ENCODE measurements at regions of chrX and their contacts with region 1.

Region 1: GRCh38 chrX:110156167-110156754 is 153.3 kb downstream of the TMEM164 start:
- DNase-seq: no peak
- H3K4me3 ChIP-seq: no peak overlapping the region
- H3K27ac ChIP-seq: no peak overlapping the region
- H3K4me1 ChIP-seq: peaks cover 5% of the 10 kb centered on the region
- H3K27me3 ChIP-seq: no peaks in the 10 kb centered on the region
- CTCF ChIP-seq: no peak
- POLR2A ChIP-seq: no peak

Region 2: DNA sequence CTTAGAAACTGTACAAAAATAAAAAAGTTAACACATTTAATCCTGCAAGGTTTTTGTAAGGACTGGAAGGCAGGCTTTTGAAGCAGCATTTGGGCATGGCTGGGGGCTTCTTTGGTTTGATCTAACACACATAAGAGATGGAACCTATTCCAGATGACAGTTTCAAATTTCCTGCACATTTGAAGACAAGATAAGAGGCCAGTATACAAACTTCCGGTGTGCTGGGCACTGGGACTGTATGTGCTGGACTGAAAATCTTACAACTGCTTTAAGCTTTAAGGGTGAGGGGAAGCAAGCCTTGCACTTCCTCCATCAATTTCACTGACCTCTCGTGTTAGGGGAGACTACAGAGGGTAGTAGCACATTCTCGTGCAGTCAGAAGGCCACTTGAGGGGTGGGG is 38.7 kb after region 1 on chrX:
- CTCF ChIA-PET with region 1: no interaction called
- POLR2A ChIA-PET with region 1: no interaction called
- dilution Hi-C with region 1: no loop called
- intact Hi-C with region 1: no loop called
- DNase-seq: no peak
- H3K4me3 ChIP-seq: no peak overlapping the region
- H3K27ac ChIP-seq: no peak overlapping the region
- H3K4me1 ChIP-seq: no peaks in the 10 kb centered on the region
- H3K27me3 ChIP-seq: no peaks in the 10 kb centered on the region
- CTCF ChIP-seq: no peak
- POLR2A ChIP-seq: no peak

Region 3: GRCh38 chrX:110210417-110211139 is 54.3 kb after region 1 on chrX:
- CTCF ChIA-PET with region 1: interaction called, 11 read pairs
- POLR2A ChIA-PET with region 1: no interaction called
- dilution Hi-C with region 1: no loop called
- intact Hi-C with region 1: no loop called
- DNase-seq: peak; percentile 72
- H3K4me3 ChIP-seq: no peak overlapping the region
- H3K27ac ChIP-seq: peak overlapping the region; percentile 41
- H3K4me1 ChIP-seq: peaks cover 11% of the 10 kb centered on the region
- H3K27me3 ChIP-seq: no peaks in the 10 kb centered on the region
- CTCF ChIP-seq: no peak
- POLR2A ChIP-seq: no peak

Region 4: DNA sequence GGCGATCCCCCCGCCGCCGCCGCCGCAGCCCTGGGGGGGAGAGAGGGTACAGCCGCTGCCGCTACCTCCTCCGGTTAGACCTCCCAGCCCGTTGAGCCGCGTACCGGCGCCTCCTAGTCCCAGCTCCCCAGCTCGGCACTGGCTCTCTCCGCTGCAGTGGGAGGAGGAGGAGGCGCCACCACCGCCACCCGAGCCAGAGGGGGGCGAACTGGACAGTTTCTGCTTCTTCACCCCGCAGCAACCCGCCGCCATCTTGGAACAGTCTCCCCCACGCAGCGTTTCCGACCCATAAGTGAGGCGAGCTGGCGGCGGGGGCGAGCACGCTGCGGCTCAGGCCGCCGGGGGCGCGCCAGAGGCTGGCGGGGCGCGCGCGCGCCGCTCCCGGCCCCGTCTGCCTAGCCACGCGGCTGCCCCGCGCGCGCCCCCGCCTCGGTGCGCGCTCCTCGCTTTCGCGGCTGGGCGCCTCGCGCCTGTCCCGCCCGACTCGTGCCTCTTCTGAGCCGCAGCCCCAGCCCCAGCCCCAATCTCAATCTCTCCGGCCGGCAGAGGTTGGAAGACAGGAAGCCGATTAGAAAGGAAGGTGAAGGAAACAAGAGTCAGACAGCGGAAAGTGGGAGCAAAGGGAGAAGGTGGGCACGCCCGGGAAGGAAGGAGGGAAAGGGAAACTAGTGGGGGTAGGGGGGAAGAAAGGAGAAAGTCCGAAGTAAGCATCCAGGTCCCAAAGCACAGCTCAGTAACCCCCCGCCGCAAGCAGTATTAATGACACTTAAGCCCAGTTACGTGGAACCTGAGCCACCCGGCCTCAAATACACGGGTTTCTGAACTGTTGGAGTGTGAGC is 161.8 kb after region 1 on chrX and contains the start of gene AMMECR1:
- CTCF ChIA-PET with region 1: interaction called, 5 read pairs
- POLR2A ChIA-PET with region 1: no interaction called
- dilution Hi-C with region 1: no loop called
- intact Hi-C with region 1: loop called (anchors 2 kb)
- DNase-seq: peak; percentile 71
- H3K4me3 ChIP-seq: peak within 1 kb of the TSS; percentile 89
- H3K27ac ChIP-seq: peak within 1 kb of the TSS; percentile 53
- H3K4me1 ChIP-seq: peaks cover 9% of the 10 kb centered on the region
- H3K27me3 ChIP-seq: no peaks in the 10 kb centered on the region
- CTCF ChIP-seq: no peak
- POLR2A ChIP-seq: no peak
- total RNA-seq, gene AMMECR1: 6.8 and 6.9 TPM in 2 replicates

Region 5: DNA sequence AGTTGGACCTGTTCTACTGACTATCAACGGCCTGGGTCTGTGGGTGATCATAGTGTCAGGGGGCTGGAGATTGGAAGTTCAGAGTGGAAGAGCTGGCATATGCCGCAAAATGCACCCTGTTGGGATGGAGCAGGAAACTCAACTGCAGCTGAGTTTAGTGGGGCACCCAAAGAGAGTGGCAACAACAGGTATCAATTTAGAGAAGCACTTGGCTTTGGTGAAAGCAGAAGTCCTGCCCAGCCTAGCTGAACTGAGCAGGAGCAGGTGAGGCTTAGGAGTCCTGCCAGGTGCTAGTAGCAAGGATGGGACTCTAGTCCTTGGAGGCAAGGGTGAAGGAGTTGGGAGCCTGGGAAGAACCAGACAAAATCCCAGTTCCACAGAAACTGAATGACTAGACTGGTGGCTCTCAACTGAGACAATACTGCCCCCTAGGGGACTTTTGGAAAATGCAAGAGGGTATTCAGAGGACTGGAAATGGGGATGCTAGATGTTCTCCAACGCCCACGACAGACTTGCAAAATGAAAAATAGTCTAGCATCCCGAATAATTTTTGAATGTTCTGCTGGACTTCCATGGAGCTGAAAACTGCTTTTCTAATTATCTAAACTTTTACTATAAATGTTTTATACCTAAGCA is 251.8 kb after region 1 on chrX:
- CTCF ChIA-PET with region 1: interaction called, 286 read pairs
- POLR2A ChIA-PET with region 1: no interaction called
- dilution Hi-C with region 1: loop called (anchors 10 kb)
- intact Hi-C with region 1: loop called (anchors 1 kb)
- DNase-seq: peak; percentile 29
- H3K4me3 ChIP-seq: no peak overlapping the region
- H3K27ac ChIP-seq: no peak overlapping the region
- H3K4me1 ChIP-seq: peaks cover 7% of the 10 kb centered on the region
- H3K27me3 ChIP-seq: no peaks in the 10 kb centered on the region
- CTCF ChIP-seq: peak; percentile 46 to 57
- POLR2A ChIP-seq: no peak

Region 6: GRCh38 chrX:110412971-110413721 is 256.9 kb after region 1 on chrX:
- CTCF ChIA-PET with region 1: interaction called, 286 read pairs
- POLR2A ChIA-PET with region 1: no interaction called
- dilution Hi-C with region 1: loop called (anchors 10 kb)
- intact Hi-C with region 1: loop called (anchors 1 kb)
- DNase-seq: peak; percentile 52
- H3K4me3 ChIP-seq: no peak overlapping the region
- H3K27ac ChIP-seq: no peak overlapping the region
- H3K4me1 ChIP-seq: peaks cover 7% of the 10 kb centered on the region
- H3K27me3 ChIP-seq: no peaks in the 10 kb centered on the region
- CTCF ChIP-seq: peak; percentile 67 to 78
- POLR2A ChIP-seq: no peak

Region 7: DNA sequence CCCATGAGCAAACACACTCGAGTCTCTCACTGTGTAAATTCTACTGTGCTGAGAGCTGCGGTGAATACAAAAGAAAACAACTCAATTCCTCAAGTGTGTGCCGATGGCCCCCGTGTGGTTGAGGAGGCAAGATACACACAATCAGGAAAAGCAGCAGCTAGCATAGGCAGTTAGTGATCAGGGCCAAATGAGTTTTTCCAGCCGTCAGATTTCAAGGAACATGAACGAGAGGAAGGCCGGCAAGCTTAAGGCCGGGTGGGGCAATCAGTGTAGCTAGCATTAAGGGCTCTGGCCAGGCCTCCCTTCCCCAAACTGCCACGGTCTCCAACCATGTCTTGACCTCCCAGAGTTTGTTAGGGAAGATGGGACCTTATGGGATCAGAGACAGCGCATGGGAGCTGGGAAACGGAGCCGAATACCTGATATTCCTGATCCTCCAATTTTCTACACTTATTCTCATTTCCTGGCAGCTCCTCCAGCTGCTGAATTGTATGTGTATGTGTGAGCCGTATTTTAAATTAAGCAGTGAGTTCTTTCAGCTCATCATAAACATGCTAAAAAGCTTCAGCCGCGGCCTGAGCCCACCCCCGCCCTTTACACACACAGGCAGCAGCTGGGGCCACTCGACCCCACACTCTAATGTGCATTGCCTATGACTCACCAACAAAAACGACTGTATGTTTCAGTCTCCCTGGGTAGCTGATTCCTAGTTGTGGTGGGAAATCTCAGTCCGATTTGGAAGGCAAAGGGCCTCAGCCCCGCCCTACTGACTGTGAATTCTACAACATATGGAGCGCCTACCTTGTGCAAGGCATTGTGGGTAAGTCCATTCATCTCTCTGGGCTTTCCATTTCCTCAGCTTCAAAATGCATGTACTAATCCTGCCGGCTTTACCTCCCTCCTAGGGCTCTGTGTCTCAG is 262.3 kb after region 1 on chrX:
- CTCF ChIA-PET with region 1: interaction called, 286 read pairs
- POLR2A ChIA-PET with region 1: no interaction called
- dilution Hi-C with region 1: loop called (anchors 10 kb)
- intact Hi-C with region 1: loop called (anchors 1 kb)
- DNase-seq: peak; percentile 30
- H3K4me3 ChIP-seq: no peak overlapping the region
- H3K27ac ChIP-seq: no peak overlapping the region
- H3K4me1 ChIP-seq: no peaks in the 10 kb centered on the region
- H3K27me3 ChIP-seq: peaks cover 0 to 3% of the 10 kb centered on the region in 2 experiments
- CTCF ChIP-seq: peak; percentile 25 to 49
- POLR2A ChIP-seq: no peak

Region 8: DNA sequence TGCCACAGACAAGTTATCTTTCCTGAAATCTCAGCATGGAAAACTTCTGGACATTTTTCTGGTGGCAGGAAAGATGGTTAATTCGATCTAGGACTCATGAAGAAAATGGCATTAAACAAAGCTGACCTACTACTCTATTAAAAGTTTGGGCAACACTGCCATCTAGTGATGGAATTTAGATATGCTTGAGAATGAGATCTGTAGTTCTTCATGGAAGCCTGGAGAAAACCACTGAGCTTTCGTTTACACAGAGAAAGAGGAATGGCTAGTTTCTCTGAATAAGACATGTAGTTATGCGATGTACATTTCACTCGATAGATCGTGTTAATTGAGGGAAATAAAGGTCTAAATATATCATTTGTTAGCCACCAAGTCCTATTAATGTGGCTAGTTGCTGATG is 691.1 kb after region 1 on chrX:
- CTCF ChIA-PET with region 1: interaction called, 4 read pairs
- POLR2A ChIA-PET with region 1: no interaction called
- dilution Hi-C with region 1: no loop called
- intact Hi-C with region 1: loop called (anchors 5 kb)
- DNase-seq: peak; percentile 42
- H3K4me3 ChIP-seq: no peak overlapping the region
- H3K27ac ChIP-seq: no peak overlapping the region
- H3K4me1 ChIP-seq: no peaks in the 10 kb centered on the region
- H3K27me3 ChIP-seq: no peaks in the 10 kb centered on the region
- CTCF ChIP-seq: peak; percentile 8 to 17
- POLR2A ChIP-seq: no peak